Activated naive CD4-positive, alpha-beta T cell treated with anti-CD3 and anti-CD28 coated beads for 36 hours (primary cell): ENCODE measurements at regions of chr3 and their contacts with region 1.

Region 1: GRCh38 chr3:52897130-52898122 is at the start of gene STIMATE:
- DNase-seq: peak; percentile 86
- H3K4me3 Mint-ChIP-seq: peak within 1 kb of the TSS; percentile 84
- H3K27ac Mint-ChIP-seq: no peak within 1 kb of the TSS
- H3K4me1 Mint-ChIP-seq: peaks cover 39% of the 10 kb centered on the region
- H3K27me3 Mint-ChIP-seq: no peaks in the 10 kb centered on the region
- total RNA-seq, gene STIMATE: 7.7 to 9.7 TPM

Region 2: DNA sequence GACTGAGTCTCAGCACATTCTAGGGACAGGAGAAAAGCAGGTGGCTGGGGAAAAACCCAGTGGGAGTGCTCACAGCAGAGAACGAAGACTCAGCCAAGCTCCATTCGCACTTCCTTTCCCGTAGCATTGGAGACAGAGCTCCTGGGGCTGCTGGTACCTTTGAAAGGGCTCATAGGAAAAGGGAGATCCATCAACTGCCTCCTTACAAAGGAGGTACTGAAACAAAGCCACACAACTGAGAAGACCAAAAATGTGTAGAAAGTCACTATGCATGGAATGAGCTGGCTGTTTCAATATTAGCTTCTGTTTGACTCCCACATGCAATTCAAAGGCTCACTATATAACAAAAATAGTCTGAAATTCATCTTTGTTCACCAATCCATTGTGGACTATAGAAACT is 17.0 kb before region 1 on chr3:
- CTCF ChIA-PET with region 1: interaction called, 5 read pairs
- intact Hi-C with region 1: loop called (anchors 2 kb)
- DNase-seq: no peak
- H3K4me3 Mint-ChIP-seq: no peak overlapping the region
- H3K27ac Mint-ChIP-seq: no peak overlapping the region
- H3K4me1 Mint-ChIP-seq: peaks cover 14% of the 10 kb centered on the region
- H3K27me3 Mint-ChIP-seq: no peaks in the 10 kb centered on the region

Region 3: DNA sequence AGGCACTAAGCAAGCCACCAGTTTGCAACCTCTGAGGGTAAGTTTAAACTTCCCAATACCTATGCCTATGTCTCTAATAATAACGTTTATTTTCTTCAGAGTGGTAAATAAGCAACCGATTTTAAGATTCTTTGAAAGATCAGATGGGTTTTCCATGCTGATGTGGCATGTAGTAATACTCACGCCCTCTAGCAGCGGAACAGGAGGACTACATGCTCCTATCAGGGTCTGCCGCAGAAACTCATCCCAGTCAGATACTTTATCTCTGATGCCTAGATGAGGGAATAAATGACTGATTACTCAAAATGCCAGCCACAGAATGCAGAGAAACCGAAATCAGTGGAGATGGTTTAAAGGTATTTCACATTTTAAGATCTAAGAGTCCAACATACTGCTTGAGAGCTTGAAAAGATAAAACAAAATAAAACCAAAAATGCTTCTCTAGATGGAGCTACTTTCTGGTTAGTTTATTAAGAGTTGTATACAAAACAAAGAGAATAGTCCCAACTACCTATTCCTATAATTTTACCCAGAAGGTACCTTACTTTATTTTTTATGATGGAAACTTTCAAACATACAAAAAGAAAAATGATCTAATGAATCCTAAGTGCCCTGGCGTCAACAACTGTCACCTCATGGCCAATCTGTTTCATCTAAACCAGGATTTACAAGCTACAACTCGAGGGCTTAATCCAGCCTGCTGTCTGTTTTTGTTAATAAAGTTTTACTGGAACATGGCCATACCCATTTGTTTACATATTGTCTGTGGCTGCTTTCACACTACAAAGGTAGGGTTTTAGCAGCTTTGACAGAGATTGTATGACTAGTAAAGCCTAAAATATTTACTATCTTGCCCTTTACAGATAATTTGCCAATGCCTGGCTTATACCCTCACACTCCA is 37.5 kb after region 1 on chr3:
- CTCF ChIA-PET with region 1: interaction called, 5 read pairs
- intact Hi-C with region 1: loop called (anchors 2 kb)
- DNase-seq: peak; percentile 76
- H3K4me3 Mint-ChIP-seq: no peak overlapping the region
- H3K27ac Mint-ChIP-seq: no peak overlapping the region
- H3K4me1 Mint-ChIP-seq: peaks cover 10% of the 10 kb centered on the region
- H3K27me3 Mint-ChIP-seq: no peaks in the 10 kb centered on the region

Region 4: GRCh38 chr3:53045518-53046170 is 148.2 kb after region 1 on chr3 and contains the start of gene SFMBT1:
- CTCF ChIA-PET with region 1: no interaction called
- intact Hi-C with region 1: loop called (anchors 1 kb)
- DNase-seq: peak; percentile 68
- H3K4me3 Mint-ChIP-seq: peak within 1 kb of the TSS; percentile 90
- H3K27ac Mint-ChIP-seq: peak within 1 kb of the TSS; percentile 90
- H3K4me1 Mint-ChIP-seq: peaks cover 42% of the 10 kb centered on the region
- H3K27me3 Mint-ChIP-seq: no peaks in the 10 kb centered on the region
- total RNA-seq, gene SFMBT1: 15.1 to 15.4 TPM

Region 5: GRCh38 chr3:53189276-53189675 is 291.9 kb after region 1 on chr3:
- CTCF ChIA-PET with region 1: no interaction called
- intact Hi-C with region 1: no loop called
- DNase-seq: no peak
- H3K4me3 Mint-ChIP-seq: no peak overlapping the region
- H3K27ac Mint-ChIP-seq: no peak overlapping the region
- H3K4me1 Mint-ChIP-seq: no peaks in the 10 kb centered on the region
- H3K27me3 Mint-ChIP-seq: no peaks in the 10 kb centered on the region